WTC11 (cell line): ENCODE measurements at regions of chr10 and their contacts with region 1.

Region 1: DNA sequence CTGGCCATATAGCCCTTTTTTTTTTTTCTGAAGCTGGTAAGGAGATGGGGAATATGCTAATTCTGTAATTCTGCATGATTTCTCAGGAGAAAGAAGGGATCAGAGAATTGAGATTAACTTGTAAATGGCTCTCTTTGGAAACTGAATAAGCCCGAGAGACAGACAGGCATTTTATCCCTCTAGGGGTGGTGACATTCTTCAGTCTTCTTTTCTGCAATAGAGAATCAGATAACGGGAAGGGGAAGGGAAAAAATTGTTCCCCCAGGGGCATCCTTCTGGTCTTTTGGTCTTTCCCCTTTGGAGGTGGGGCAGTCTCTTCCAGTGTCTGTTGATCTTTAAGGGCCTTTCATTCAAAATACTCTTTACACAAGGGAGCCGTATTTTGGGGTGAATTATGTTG is 34.2 kb downstream of the HK1 start:
- DNase-seq: no peak
- ATAC-seq: no peak
- H3K4me3 Mint-ChIP-seq: no peak overlapping the region
- H3K27ac Mint-ChIP-seq: peak overlapping the region; percentile 93
- H3K4me1 Mint-ChIP-seq: peaks cover 52% of the 10 kb centered on the region
- H3K27me3 Mint-ChIP-seq: no peaks in the 10 kb centered on the region
- CTCF ChIP-seq: no peak

Region 2: DNA sequence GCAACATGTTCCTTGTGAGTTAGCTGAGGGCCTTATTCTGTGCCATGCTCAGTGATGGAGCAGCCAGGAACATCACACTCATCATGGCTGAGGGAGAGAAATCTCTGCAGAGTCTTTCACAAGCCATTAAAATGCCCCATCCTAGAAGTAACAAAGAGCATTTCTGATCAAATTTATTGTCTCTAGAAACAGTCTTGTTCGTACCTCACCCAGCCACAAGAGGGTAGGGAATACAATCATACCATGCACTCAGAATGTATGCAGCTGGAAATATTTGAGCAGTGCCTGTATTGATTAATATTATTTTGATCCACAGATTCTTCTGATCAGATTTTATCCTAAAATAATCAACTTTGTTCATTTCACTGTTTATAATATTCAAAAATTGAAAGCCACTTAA is 171.2 kb before region 1 on chr10:
- CTCF ChIA-PET with region 1: no interaction called
- POLR2A ChIA-PET with region 1: no interaction called
- DNase-seq: no peak
- ATAC-seq: no peak
- H3K4me3 Mint-ChIP-seq: no peak overlapping the region
- H3K27ac Mint-ChIP-seq: no peak overlapping the region; the same call in 1 of the 2 replicates
- H3K4me1 Mint-ChIP-seq: no peaks in the 10 kb centered on the region
- H3K27me3 Mint-ChIP-seq: no peaks in the 10 kb centered on the region
- CTCF ChIP-seq: no peak

Region 3: GRCh38 chr10:69290993-69291392 is 21.5 kb before region 1 on chr10:
- CTCF ChIA-PET with region 1: interaction called, 10 read pairs
- POLR2A ChIA-PET with region 1: no interaction called
- DNase-seq: no peak
- ATAC-seq: no peak
- H3K4me3 Mint-ChIP-seq: no peak overlapping the region
- H3K27ac Mint-ChIP-seq: no peak overlapping the region
- H3K4me1 Mint-ChIP-seq: peaks cover 12% of the 10 kb centered on the region
- H3K27me3 Mint-ChIP-seq: peaks cover 2% of the 10 kb centered on the region; the same call in 1 of the 2 replicates
- CTCF ChIP-seq: no peak

Region 4: GRCh38 chr10:69324583-69324982 is 12.1 kb after region 1 on chr10:
- CTCF ChIA-PET with region 1: interaction called, 11 read pairs
- POLR2A ChIA-PET with region 1: no interaction called
- DNase-seq: no peak
- ATAC-seq: no peak
- H3K4me3 Mint-ChIP-seq: no peak overlapping the region
- H3K27ac Mint-ChIP-seq: peak overlapping the region; percentile 61
- H3K4me1 Mint-ChIP-seq: peaks cover 95% of the 10 kb centered on the region
- H3K27me3 Mint-ChIP-seq: no peaks in the 10 kb centered on the region
- CTCF ChIP-seq: no peak

Region 5: GRCh38 chr10:69362468-69362954 is 50.0 kb after region 1 on chr10:
- CTCF ChIA-PET with region 1: interaction called, 15 read pairs
- POLR2A ChIA-PET with region 1: interaction called, 3 read pairs
- DNase-seq: no peak
- ATAC-seq: no peak
- H3K4me3 Mint-ChIP-seq: no peak overlapping the region
- H3K27ac Mint-ChIP-seq: peak overlapping the region; percentile 86; the same call in 1 of the 2 replicates
- H3K4me1 Mint-ChIP-seq: peaks cover 44% of the 10 kb centered on the region
- H3K27me3 Mint-ChIP-seq: no peaks in the 10 kb centered on the region
- CTCF ChIP-seq: no peak

Region 6: GRCh38 chr10:69375307-69376151 is 63.0 kb after region 1 on chr10:
- CTCF ChIA-PET with region 1: interaction called, 15 read pairs
- POLR2A ChIA-PET with region 1: interaction called, 4 read pairs
- DNase-seq: peak; percentile 82
- ATAC-seq: peak; percentile 100
- H3K4me3 Mint-ChIP-seq: no peak overlapping the region
- H3K27ac Mint-ChIP-seq: peak overlapping the region; percentile 91
- H3K4me1 Mint-ChIP-seq: peaks cover 45% of the 10 kb centered on the region
- H3K27me3 Mint-ChIP-seq: no peaks in the 10 kb centered on the region
- CTCF ChIP-seq: no peak

Region 7: GRCh38 chr10:69392481-69393000 is 80.0 kb after region 1 on chr10:
- CTCF ChIA-PET with region 1: interaction called, 20 read pairs
- POLR2A ChIA-PET with region 1: interaction called, 4 read pairs
- DNase-seq: peak; percentile 92
- ATAC-seq: peak; percentile 88
- H3K4me3 Mint-ChIP-seq: no peak overlapping the region
- H3K27ac Mint-ChIP-seq: peak overlapping the region; percentile 78
- H3K4me1 Mint-ChIP-seq: peaks cover 42% of the 10 kb centered on the region
- H3K27me3 Mint-ChIP-seq: no peaks in the 10 kb centered on the region
- CTCF ChIP-seq: peak; percentile 97